Prostate gland (tissue), 2 donors: ENCODE measurements at regions of chr4 and their contacts with region 1.

Region 1: DNA sequence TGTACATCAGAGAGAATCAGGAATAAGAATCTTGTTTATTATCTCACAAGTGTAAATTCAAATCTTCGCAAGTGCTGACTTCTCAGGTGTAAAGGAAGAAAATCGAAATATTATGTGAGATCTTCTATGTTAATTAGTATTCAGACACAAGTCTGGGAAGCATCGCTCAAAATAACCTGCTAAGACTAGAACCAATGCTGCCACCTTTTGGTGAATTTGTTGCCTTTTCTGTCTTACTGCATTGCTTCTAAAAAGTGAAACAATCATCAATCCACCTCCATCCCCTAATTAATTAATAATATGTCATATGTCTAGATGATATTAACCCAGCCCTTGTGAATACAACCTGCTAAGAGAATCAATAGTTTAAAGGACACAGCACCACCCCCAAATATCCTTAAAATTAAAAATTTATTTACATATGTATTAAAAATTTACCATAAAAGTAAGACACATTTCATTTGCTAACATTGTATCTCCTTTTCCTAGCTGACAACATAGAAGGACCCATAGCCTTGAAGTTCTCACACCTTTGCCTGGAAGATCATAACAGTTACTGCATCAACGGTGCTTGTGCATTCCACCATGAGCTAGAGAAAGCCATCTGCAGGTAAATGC is 3.5 kb downstream of the EPGN start:
- DNase-seq: peak; percentile 26
- H3K4me3 ChIP-seq: no peak overlapping the region
- H3K27ac ChIP-seq: no peak overlapping the region
- H3K4me1 ChIP-seq: no peaks in the 10 kb centered on the region
- H3K27me3 ChIP-seq: no peaks in the 10 kb centered on the region
- CTCF ChIP-seq: peak in 3 of 4 experiments; percentile 43 to 61 (median 50)
- POLR2A ChIP-seq: no peak

Region 2: GRCh38 chr4:74228691-74229640 is 82.8 kb before region 1 on chr4:
- intact Hi-C with region 1: loop called (anchors 10 kb)
- DNase-seq: peak; percentile 63
- H3K4me3 ChIP-seq: no peak overlapping the region
- H3K27ac ChIP-seq: no peak overlapping the region
- H3K4me1 ChIP-seq: no peaks in the 10 kb centered on the region
- H3K27me3 ChIP-seq: no peaks in the 10 kb centered on the region
- CTCF ChIP-seq: peak; percentile 53 to 78 (median 68)
- POLR2A ChIP-seq: no peak